ENCODE measurements at regions of chr2 and their contacts with region 1.

Region 1: DNA sequence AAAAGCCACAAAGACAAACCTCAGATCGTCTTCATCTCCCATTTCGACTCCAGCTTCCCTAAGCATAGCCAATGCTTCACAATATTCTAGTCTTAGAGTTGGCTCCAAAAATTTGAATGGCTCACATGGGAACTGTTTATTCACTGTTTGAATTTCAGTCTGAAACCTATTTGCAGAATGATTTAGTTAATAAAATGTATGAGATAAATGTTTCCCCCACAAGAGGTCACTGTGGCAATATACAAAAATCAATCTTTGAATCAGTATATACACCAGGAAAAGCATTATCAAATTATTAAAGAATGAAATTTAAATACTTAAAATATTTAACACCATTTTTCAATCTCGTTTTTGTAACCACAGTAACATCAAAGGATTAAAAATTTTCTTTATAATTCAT is 40.0 kb upstream of the MCM6 start:
- DNase-seq: peak in 1 of 2 experiments; percentile 35
- H3K4me3 ChIP-seq: no peak overlapping the region
- H3K4me1 ChIP-seq: no peaks in the 10 kb centered on the region
- H3K27me3 ChIP-seq: no peaks in the 10 kb centered on the region

Region 2: GRCh38 chr2:136384531-136385303 is 468.5 kb after region 1 on chr2:
- in situ Hi-C with region 1: loop called (anchors 5 kb)
- DNase-seq: peak; percentile 32 to 50
- H3K4me3 ChIP-seq: no peak overlapping the region
- H3K4me1 ChIP-seq: no peaks in the 10 kb centered on the region
- H3K27me3 ChIP-seq: peaks cover 2% of the 10 kb centered on the region; the same call in 1 of the 2 replicates